ENCODE measurements at regions of chr1 and their contacts with region 1.

Region 1: GRCh38 chr1:203038891-203039608 is 12.8 kb downstream of the PPFIA4 start:
- DNase-seq: peak; percentile 80
- ATAC-seq: peak; percentile 84
- H3K4me3 Mint-ChIP-seq: no peak overlapping the region
- H3K27ac Mint-ChIP-seq: no peak overlapping the region
- H3K4me1 Mint-ChIP-seq: peaks cover 26% of the 10 kb centered on the region
- H3K27me3 Mint-ChIP-seq: no peaks in the 10 kb centered on the region; the same call in 1 of the 2 replicates
- CTCF ChIP-seq: peak; percentile 54

Region 2: GRCh38 chr1:203026031-203026989 is 12.7 kb before region 1 on chr1 and contains the start of gene PPFIA4:
- CTCF ChIA-PET with region 1: interaction called, 89 read pairs
- POLR2A ChIA-PET with region 1: interaction called, 3 read pairs
- DNase-seq: peak; percentile 88
- ATAC-seq: peak; percentile 82
- H3K4me3 Mint-ChIP-seq: peak within 1 kb of the TSS; percentile 77
- H3K27ac Mint-ChIP-seq: no peak within 1 kb of the TSS
- H3K4me1 Mint-ChIP-seq: peaks cover 15% of the 10 kb centered on the region
- H3K27me3 Mint-ChIP-seq: peaks cover 29% of the 10 kb centered on the region
- CTCF ChIP-seq: no peak
- total RNA-seq, gene PPFIA4: 21.1 to 24.9 TPM (median 22.7 TPM) in 3 replicates

Region 3: DNA sequence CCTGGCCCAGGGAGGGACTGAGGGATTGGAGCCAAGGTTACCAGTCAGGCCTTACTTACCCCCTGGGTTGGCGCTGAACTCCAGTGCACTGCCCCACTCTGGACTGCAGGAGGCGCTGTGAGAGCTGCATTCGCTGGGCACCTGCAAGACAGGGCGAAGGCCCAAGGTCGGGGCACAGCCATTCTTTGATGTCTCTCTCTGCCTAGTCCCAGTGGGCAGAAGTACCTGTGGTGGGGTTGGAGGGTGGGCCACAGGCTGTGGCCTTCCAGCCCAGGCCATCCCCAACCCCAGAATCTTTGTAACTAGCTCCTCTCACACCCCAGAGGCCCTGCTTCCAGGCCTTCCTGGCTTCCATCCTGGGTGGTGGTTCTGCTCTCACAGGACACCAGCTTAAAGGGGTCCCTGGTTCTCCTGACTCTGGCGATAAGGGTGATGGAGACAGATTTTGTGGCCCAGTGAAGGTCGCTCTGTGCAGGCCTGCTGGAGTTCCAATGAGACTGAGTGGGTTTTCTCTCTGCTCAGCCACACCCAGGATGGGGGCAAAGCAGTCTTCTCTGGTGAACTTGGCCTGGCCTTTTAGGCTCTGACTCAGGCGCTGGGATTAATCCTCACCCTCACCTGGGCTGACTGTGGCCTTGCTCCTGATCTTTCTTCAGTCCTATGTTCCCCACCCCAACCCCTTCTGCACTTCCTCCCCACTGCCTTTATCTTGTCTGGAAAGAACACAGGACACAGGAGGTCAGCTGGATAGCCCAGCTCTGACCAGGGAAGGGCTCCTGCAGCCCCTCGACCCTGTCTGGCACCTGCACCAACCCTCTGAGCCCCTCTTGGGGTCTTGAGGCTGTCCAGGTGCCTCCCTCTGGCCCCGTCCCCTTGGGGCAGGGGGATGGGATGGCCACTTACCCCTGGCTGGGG is 45.8 kb after region 1 on chr1:
- CTCF ChIA-PET with region 1: interaction called, 123 read pairs
- POLR2A ChIA-PET with region 1: no interaction called
- DNase-seq: peak; percentile 84
- ATAC-seq: peak; percentile 59
- H3K4me3 Mint-ChIP-seq: no peak overlapping the region
- H3K27ac Mint-ChIP-seq: no peak overlapping the region
- H3K4me1 Mint-ChIP-seq: peaks cover 34% of the 10 kb centered on the region
- H3K27me3 Mint-ChIP-seq: no peaks in the 10 kb centered on the region; the same call in 1 of the 2 replicates
- CTCF ChIP-seq: peak; percentile 88

Region 4: DNA sequence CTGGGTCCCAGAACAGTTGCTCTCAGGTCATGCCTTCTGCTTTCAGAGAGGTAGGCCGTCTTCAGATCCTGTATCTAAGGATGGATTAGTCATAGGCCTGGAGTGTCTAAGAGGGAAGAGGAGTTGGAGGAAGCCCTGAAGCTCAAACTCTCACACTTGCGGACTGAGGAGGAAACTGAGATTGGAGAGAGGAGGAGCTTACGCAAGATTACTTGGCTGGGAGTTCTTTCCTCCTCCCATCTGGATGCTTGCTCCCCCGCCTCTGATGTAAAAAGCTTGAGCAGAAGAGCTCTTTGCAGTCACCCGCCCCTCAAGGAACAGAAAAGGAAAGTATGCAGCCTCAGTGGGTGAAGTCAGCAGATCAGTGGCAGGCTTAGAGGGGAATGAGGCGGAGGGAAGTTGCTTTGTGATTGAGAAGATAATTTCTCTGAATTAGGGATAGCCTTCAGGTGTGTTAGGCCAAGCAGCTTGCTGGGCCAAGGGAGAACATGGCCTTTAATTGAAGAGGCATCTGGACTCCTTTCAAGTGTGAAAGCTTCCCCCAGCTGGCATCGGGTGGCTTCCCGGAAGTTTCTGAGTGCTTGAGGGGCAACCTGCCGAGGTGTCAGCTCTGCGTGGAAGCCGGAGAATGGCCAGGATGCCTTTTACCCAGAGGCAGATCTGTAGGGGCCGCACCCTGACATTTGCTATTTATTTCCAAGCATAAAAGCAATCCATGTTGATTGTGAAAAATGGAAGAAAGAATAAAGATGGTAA is 95.1 kb after region 1 on chr1:
- CTCF ChIA-PET with region 1: interaction called, 128 read pairs
- POLR2A ChIA-PET with region 1: no interaction called
- DNase-seq: no peak
- ATAC-seq: peak; percentile 40
- H3K4me3 Mint-ChIP-seq: no peak overlapping the region
- H3K27ac Mint-ChIP-seq: no peak overlapping the region
- H3K4me1 Mint-ChIP-seq: peaks cover 11% of the 10 kb centered on the region
- H3K27me3 Mint-ChIP-seq: peaks cover 7% of the 10 kb centered on the region
- CTCF ChIP-seq: no peak

Region 5: DNA sequence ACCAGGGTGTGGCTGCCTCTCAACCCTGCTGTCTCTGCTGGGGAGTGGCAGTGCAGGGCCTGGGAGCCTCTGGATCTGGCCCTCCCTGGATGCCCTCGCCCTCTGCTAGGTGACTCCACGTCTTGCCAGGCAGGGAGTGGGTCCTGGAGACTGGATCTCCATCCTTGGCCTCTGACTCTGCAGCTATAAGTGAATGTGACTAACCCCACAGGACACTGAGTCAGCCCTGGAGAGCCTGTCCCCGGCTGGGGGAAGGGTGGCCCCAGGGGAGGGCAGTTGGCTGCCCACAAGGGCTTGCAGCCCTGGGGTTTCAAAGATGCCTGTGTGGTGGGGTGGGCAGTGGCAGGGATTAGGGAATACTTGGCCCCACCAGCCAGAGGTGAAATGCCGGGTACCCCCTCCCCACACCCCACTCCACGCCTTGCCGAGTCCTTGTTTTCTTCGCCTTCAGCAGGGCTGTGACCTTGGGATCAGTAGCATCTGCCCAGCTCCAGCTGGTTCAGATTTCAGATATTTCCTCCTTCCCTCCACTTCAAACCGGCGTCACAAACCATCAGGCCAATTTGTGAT is 138.5 kb after region 1 on chr1:
- CTCF ChIA-PET with region 1: interaction called, 78 read pairs
- POLR2A ChIA-PET with region 1: no interaction called
- DNase-seq: no peak
- ATAC-seq: no peak
- H3K4me3 Mint-ChIP-seq: no peak overlapping the region
- H3K27ac Mint-ChIP-seq: no peak overlapping the region
- H3K4me1 Mint-ChIP-seq: peaks cover 21% of the 10 kb centered on the region
- H3K27me3 Mint-ChIP-seq: no peaks in the 10 kb centered on the region
- CTCF ChIP-seq: no peak

Region 6: GRCh38 chr1:203224716-203225470 is 185.8 kb after region 1 on chr1:
- CTCF ChIA-PET with region 1: interaction called, 13 read pairs
- POLR2A ChIA-PET with region 1: no interaction called
- DNase-seq: no peak
- ATAC-seq: no peak
- H3K4me3 Mint-ChIP-seq: no peak overlapping the region
- H3K27ac Mint-ChIP-seq: no peak overlapping the region
- H3K4me1 Mint-ChIP-seq: no peaks in the 10 kb centered on the region
- H3K27me3 Mint-ChIP-seq: peaks cover 3% of the 10 kb centered on the region; the same call in 1 of the 2 replicates
- CTCF ChIP-seq: no peak

Region 7: GRCh38 chr1:203326830-203327683 is 288.0 kb after region 1 on chr1:
- CTCF ChIA-PET with region 1: interaction called, 11 read pairs
- POLR2A ChIA-PET with region 1: no interaction called
- DNase-seq: peak; percentile 91
- ATAC-seq: peak; percentile 85
- H3K4me3 Mint-ChIP-seq: peak overlapping the region; percentile 69
- H3K27ac Mint-ChIP-seq: no peak overlapping the region
- H3K4me1 Mint-ChIP-seq: peaks cover 50% of the 10 kb centered on the region
- H3K27me3 Mint-ChIP-seq: peaks cover 62% of the 10 kb centered on the region
- CTCF ChIP-seq: no peak